SK-N-SH (cell line): ENCODE measurements at regions of chr16 and their contacts with region 1.

Region 1: GRCh38 chr16:30112197-30113030 is 923 bp downstream of the GDPD3 start:
- DNase-seq: peak; percentile 87
- H3K4me3 ChIP-seq: no peak overlapping the region
- H3K27ac ChIP-seq: no peak overlapping the region
- H3K4me1 ChIP-seq: peaks cover 5 to 6% of the 10 kb centered on the region in 2 experiments; a peak in 1 of 4 replicates
- H3K27me3 ChIP-seq: no peaks in the 10 kb centered on the region
- CTCF ChIP-seq: peak; percentile 65
- EP300 ChIP-seq: no peak
- RAD21 ChIP-seq: peak; percentile 75

Region 2: GRCh38 chr16:29154676-29155121 is 957.7 kb before region 1 on chr16:
- CTCF ChIA-PET with region 1: no interaction called
- POLR2A ChIA-PET with region 1: no interaction called
- DNase-seq: no peak
- H3K4me3 ChIP-seq: no peak overlapping the region
- H3K27ac ChIP-seq: no peak overlapping the region; a peak in 1 of 4 replicates
- H3K4me1 ChIP-seq: peaks cover 12 to 32% of the 10 kb centered on the region in 2 experiments; a peak in 3 of 4 replicates
- H3K27me3 ChIP-seq: no peaks in the 10 kb centered on the region
- CTCF ChIP-seq: no peak
- EP300 ChIP-seq: no peak
- RAD21 ChIP-seq: no peak

Region 3: DNA sequence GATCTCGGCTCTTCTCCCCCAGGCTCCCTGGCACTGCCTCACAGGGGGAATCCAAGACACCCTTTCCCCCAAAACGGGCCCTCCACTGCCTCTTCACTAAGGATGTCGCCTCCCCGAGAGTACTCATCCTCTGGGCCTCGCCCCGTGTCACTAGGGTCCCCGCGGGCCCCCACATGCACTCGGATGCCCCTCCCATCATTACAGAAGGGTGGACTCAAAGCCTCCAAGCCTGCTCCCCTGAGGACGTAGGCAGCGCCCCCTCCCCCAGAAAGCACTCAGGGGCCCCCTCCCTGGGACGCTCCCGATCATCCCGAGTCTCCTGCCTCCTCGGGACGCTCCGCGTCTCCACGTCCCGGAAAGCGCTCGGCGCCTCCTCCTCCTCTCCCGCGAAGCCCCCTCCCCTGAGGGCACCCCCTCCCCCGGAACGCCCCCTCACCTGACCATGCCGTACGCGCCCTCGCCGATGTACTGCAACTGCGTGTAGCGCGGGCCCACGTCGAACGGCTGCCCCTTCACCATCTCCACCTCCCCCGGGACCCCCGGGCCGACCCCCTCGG is 10.3 kb after region 1 on chr16:
- CTCF ChIA-PET with region 1: interaction called, 11 read pairs
- POLR2A ChIA-PET with region 1: no interaction called
- DNase-seq: no peak
- H3K4me3 ChIP-seq: peak overlapping the region; percentile 65 to 70
- H3K27ac ChIP-seq: peak overlapping the region in 1 of 2 experiments; percentile 54; a peak in 1 of 4 replicates
- H3K4me1 ChIP-seq: peaks cover 9 to 11% of the 10 kb centered on the region in 2 experiments; a peak in 3 of 4 replicates
- H3K27me3 ChIP-seq: no peaks in the 10 kb centered on the region
- CTCF ChIP-seq: no peak
- EP300 ChIP-seq: no peak
- RAD21 ChIP-seq: no peak

Region 4: DNA sequence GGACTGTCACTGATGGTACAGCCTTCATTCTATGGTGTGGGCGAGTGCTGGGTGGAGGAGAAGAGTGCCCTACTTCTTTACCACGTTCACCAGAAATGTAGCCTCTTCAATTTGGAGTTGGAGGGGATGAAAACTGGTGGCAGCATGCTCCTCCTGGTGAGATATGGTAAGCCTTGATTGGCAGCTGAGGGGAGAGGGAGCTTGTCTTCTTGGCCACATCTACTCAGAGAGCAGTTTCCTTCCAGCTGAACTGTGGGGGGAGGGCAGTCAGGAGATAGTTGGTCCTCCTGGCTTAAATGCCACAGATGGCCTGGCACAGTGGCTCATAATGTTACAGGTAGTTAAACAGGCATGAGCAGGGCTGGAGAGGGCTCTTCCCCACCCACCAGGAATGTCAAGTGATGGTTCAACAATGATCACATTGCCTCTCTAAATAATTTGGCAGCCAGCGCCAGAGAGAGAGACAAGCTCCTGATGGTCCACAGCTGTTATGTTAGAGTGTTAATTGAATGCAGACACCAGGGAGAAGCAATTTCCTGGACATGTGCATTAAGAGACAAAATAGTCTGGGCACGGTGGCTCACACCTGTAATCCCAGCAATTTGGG is 19.6 kb after region 1 on chr16:
- CTCF ChIA-PET with region 1: interaction called, 10 read pairs
- POLR2A ChIA-PET with region 1: no interaction called
- DNase-seq: no peak
- H3K4me3 ChIP-seq: no peak overlapping the region
- H3K27ac ChIP-seq: peak overlapping the region in 1 of 2 experiments; percentile 36; a peak in 1 of 4 replicates
- H3K4me1 ChIP-seq: peaks cover 0 to 13% of the 10 kb centered on the region in 2 experiments; a peak in 1 of 4 replicates
- H3K27me3 ChIP-seq: no peaks in the 10 kb centered on the region
- CTCF ChIP-seq: no peak
- EP300 ChIP-seq: no peak
- RAD21 ChIP-seq: no peak